Activated B cell treated with CpG ODN at 0.5 μM for 24 hours (primary cell): ENCODE measurements at regions of chr1 and their contacts with region 1.

Region 1: DNA sequence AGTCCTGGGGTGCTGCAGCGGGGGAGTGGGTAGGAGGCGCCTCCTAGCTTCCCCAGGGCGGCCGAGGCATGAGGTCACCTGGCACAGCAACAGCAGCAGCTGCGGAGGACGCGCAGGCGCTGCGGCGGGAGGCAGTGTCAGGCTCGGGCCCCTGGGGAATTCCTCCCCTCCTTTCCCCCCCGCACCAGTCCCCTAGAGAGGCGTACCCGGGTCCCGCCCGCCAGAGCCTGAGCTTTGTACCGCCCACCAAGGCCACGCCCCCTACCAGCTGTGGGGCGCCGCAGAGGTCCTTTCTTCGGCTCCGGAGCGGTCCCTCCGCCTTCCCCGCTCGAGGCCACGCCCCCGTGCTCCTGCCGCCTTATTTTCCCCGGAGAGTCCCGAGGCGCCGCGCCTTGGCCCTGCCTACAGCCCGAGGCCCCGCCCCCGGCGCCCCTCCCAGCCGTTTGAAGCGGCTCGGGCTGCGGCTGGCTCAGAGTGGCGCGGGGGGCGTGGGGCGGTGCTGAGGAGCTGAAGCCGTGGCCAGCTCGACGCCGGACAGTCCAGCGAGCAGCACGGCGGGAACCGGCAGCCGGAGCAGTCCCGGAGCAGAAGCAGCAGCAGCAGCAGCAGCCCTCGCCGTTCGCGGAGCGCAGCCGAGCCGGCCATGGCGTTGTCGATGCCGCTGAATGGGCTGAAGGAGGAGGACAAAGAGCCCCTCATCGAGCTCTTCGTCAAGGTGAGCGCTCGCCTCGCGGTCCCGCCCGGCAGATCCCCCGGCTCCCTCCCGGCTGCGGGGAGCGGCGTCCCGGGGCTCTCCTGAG is at the start of gene CLIC4:
- DNase-seq: peak; percentile 99
- ATAC-seq: peak; percentile 78
- H3K4me3 Mint-ChIP-seq: peak within 1 kb of the TSS; percentile 95
- H3K27ac Mint-ChIP-seq: peak within 1 kb of the TSS; percentile 99
- H3K4me1 Mint-ChIP-seq: peaks cover 73% of the 10 kb centered on the region
- H3K27me3 Mint-ChIP-seq: no peaks in the 10 kb centered on the region
- CTCF ChIP-seq: no peak
- total RNA-seq, gene CLIC4: 98.2 and 99.8 TPM in 2 replicates

Region 2: GRCh38 chr1:23367791-23368561 is 1377.1 kb before region 1 on chr1:
- CTCF ChIA-PET with region 1: no interaction called
- POLR2A ChIA-PET with region 1: no interaction called
- intact Hi-C with region 1: loop called (anchors 10 kb)
- DNase-seq: peak; percentile 88
- ATAC-seq: peak; percentile 88
- H3K4me3 Mint-ChIP-seq: peak overlapping the region; percentile 97
- H3K27ac Mint-ChIP-seq: peak overlapping the region; percentile 97
- H3K4me1 Mint-ChIP-seq: peaks cover 26% of the 10 kb centered on the region
- H3K27me3 Mint-ChIP-seq: no peaks in the 10 kb centered on the region
- CTCF ChIP-seq: no peak

Region 3: DNA sequence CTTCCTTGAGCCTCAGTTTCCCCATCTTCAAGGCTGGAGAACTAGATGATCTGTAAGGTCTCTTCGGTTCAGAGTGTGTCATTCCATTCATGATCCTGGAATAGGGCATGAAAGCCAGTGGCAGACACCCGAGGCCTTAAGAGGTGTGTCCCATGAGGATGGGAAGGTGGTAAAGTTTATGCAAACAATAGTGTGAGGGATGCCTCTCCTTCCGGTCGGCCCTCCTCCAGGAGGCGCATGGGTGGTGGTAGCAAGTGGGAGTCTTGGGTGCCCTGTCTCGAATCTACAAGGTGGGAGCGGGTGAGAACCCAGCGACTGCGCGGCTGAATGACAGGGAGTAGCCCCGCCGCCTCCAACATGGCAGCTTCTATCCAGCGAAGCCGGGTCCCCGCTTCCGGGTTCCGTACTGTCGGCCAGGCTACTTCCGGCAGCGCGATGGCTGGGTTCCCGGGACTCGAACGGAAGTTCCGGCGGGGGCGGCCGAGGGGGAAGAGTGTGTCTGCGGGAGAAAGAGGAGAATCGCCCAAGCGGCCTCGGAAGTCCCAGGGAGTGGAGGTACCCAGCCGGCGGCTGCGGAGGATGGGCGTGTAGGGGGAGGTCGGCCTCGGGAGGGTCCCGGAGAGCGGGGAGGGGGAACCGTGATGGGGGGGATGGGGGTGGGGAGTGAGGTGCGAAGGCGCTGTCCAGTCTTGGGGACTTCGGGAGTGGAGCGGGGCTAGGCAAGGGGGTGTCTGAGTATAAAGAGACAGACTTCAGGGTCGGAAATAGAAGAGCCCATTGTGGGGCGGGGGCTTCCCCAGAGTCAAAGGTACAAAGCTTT is 954.2 kb before region 1 on chr1 and contains the start of gene LYPLA2:
- CTCF ChIA-PET with region 1: no interaction called
- POLR2A ChIA-PET with region 1: no interaction called
- intact Hi-C with region 1: no loop called
- DNase-seq: peak; percentile 81
- ATAC-seq: peak; percentile 90
- H3K4me3 Mint-ChIP-seq: peak within 1 kb of the TSS; percentile 99
- H3K27ac Mint-ChIP-seq: peak within 1 kb of the TSS; percentile 95
- H3K4me1 Mint-ChIP-seq: peaks cover 26% of the 10 kb centered on the region
- H3K27me3 Mint-ChIP-seq: no peaks in the 10 kb centered on the region
- CTCF ChIP-seq: no peak
- total RNA-seq, gene LYPLA2: 75.8 and 81.6 TPM in 2 replicates

Region 4: GRCh38 chr1:24536391-24536840 is 208.7 kb before region 1 on chr1:
- CTCF ChIA-PET with region 1: no interaction called
- POLR2A ChIA-PET with region 1: interaction called, 3 read pairs
- intact Hi-C with region 1: loop called (anchors 2 kb)
- DNase-seq: peak; percentile 51
- ATAC-seq: peak; percentile 73
- H3K4me3 Mint-ChIP-seq: peak overlapping the region; percentile 81
- H3K27ac Mint-ChIP-seq: peak overlapping the region; percentile 99
- H3K4me1 Mint-ChIP-seq: peaks cover 74% of the 10 kb centered on the region
- H3K27me3 Mint-ChIP-seq: no peaks in the 10 kb centered on the region
- CTCF ChIP-seq: no peak

Region 5: GRCh38 chr1:24664507-24665033 is 80.5 kb before region 1 on chr1:
- CTCF ChIA-PET with region 1: no interaction called
- POLR2A ChIA-PET with region 1: no interaction called
- intact Hi-C with region 1: no loop called
- DNase-seq: no peak
- ATAC-seq: no peak
- H3K4me3 Mint-ChIP-seq: no peak overlapping the region
- H3K27ac Mint-ChIP-seq: no peak overlapping the region
- H3K4me1 Mint-ChIP-seq: peaks cover 2% of the 10 kb centered on the region
- H3K27me3 Mint-ChIP-seq: no peaks in the 10 kb centered on the region
- CTCF ChIP-seq: no peak

Region 6: GRCh38 chr1:24688621-24689195 is 56.4 kb before region 1 on chr1:
- CTCF ChIA-PET with region 1: interaction called, 31 read pairs
- POLR2A ChIA-PET with region 1: interaction called, 11 read pairs
- intact Hi-C with region 1: loop called (anchors 1 kb)
- DNase-seq: peak; percentile 46
- ATAC-seq: peak; percentile 93
- H3K4me3 Mint-ChIP-seq: no peak overlapping the region
- H3K27ac Mint-ChIP-seq: peak overlapping the region; percentile 8
- H3K4me1 Mint-ChIP-seq: peaks cover 7% of the 10 kb centered on the region
- H3K27me3 Mint-ChIP-seq: no peaks in the 10 kb centered on the region
- CTCF ChIP-seq: peak; percentile 40

Region 7: DNA sequence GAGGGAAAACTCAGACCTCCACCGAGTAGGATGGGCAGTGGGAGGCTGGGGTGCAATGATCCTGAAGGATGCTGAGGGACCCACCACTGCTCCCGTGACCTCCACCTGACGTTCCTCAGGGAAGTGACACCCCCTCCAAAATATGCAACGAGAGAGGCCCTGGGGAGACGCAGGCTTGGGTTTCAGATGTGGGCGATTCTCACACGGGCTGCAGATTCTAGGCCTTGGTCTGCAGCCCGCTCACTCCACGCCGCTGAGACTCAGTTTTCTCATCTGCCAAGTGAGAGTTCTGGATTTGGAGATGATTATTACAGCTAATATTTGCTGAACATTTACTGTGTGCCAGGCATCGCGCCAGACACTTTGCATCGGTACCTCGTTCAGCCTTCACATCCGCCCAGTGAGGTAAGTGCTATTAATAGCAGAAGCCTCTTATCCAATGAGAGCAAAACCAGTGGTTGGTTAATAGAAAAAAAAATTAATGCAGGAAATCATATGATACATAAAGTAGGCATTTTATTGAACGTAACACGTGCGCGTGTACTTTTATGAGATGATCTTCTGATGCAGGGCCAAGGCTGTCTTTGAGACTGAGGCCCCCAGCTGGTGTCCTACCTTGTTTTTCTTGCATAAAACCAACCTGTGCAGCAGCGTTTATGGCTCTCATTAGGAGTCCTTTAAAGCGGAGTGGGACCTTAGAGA is 287.0 kb after region 1 on chr1:
- CTCF ChIA-PET with region 1: no interaction called
- POLR2A ChIA-PET with region 1: interaction called, 3 read pairs
- intact Hi-C with region 1: loop called (anchors 5 kb)
- DNase-seq: peak; percentile 61
- ATAC-seq: peak; percentile 50
- H3K4me3 Mint-ChIP-seq: peak overlapping the region; percentile 80
- H3K27ac Mint-ChIP-seq: peak overlapping the region; percentile 97
- H3K4me1 Mint-ChIP-seq: peaks cover 3% of the 10 kb centered on the region
- H3K27me3 Mint-ChIP-seq: no peaks in the 10 kb centered on the region
- CTCF ChIP-seq: no peak

Region 8: DNA sequence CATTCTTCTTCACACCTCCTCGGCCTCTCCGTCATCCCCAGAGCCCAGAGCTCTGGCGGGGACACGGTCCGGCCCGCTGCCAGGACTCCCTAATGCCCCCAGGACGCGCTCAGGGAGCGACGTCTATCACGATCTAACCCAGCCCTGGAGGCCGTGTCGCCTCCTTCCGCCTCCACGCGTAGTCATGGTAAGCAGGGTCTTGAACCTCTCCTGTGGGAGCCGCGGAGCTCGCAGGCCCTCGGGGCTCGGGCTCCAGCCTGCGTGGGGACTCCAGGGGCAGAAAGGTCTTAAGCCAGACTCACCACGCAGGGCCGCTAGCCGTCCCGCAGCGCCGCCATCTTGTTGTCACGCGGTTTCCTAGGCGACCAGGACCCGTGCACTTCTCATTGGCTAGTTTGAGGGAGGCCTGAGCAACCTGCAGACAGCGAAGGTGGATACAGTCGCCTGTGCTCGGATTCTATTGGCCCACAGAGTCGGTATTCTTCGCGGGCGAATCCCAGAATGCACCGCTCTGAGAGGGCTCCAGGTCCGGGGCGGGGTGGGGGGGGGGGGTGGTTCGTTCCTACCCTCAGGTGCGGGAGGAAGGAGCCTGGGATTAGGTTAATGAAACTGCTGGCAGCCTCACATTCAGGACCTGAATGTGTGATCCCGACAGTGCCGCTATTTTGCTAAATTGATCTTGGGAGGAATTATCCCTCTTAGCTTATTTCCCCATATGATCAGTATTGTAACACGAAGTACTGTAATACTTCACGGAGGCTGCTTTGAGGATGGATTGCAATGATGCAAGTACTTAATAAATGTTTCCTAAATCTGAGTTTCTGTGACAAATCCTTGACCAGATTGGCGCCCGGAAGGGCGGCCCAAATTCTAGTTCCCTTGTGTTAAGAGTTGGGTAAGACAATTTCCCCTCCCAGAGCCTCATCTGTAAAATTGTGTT is 1561.4 kb after region 1 on chr1 and contains the start of gene UBXN11:
- CTCF ChIA-PET with region 1: no interaction called
- POLR2A ChIA-PET with region 1: interaction called, 12 read pairs
- intact Hi-C with region 1: no loop called
- DNase-seq: peak; percentile 81
- ATAC-seq: peak; percentile 99
- H3K4me3 Mint-ChIP-seq: peak within 1 kb of the TSS; percentile 99
- H3K27ac Mint-ChIP-seq: peak within 1 kb of the TSS; percentile 94
- H3K4me1 Mint-ChIP-seq: peaks cover 27% of the 10 kb centered on the region
- H3K27me3 Mint-ChIP-seq: no peaks in the 10 kb centered on the region
- CTCF ChIP-seq: no peak
- total RNA-seq, gene UBXN11: 35.5 and 36.9 TPM in 2 replicates